Cardiac septum (tissue), 1 donor: ENCODE measurements at regions of chr19 and their contacts with region 1.

Region 1: DNA sequence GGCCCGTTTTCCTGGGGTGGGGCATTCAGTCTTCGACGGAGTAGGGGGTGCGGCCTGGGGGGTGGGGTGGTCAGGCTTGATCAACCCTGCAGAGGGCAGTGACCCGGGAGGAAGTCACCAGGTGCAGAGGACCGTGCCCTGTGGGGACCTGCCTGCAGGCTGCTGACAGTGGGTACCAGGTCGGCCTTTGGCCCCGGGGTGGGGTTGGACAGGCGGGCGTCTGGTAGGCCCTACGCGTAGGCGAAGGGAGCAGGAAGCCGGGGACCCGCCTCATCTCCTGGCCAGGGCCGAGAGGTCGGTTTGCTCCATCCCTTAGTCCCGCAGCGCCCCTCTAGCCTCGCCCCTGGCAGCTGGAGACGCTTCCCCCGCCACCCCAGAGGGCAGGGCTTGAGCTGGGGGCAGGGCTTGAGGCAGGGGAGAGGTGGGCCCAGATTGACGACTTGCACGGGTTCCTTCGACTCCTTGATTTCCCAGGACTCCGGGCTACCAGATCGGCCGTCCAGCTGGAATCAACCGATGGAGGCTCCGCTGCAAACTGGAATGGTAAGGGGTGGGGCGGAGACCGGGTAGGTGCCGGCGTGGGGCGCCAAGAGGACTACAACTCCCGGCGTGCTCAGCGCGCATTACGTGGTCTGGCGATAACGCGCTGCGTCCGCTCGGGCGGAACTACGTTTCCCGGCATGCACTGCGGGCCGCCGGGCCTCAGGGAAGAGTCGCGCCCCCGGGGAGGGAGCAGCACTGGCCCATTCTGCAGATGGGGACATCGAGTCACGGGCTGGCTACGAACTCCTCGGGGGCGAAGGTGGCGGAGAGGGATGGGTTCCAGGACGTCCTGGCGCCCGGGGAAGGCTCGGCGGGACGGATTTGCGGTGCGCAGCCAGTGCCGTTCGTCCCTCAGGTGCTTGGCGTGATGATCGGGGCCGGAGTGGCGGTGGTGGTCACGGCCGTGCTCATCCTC is at the start of gene PNPLA6:
- DNase-seq: peak; percentile 98
- total RNA-seq, gene PNPLA6: 41.9 TPM

Region 2: DNA sequence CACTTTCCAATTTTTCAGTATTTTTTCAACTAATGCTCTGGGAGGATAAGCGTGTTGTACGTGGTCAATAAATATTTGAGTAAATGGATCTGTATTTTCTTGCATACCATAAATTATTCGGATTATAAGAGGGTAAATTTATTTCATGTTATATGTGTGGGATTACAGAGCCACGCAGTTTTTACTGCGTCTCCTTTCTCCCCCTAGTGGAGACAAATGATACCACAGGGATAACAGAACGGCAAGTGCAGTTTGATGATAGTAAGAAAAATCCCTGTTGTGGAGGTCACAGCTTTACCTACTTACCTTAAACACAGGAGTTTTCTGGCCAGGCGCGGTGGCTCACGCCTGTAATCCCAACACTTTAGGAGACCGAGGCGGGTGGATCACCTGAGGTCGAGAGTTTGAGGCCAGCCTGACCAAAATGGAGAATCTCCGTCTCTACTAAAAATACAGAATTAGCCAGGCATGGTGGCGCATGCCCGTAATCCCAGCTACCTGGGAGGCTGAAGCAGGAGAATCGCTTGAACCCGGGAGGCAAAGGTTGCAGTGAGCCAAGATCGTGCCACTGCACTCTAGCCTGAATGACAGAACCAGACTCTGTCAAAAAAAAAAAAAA is 530.9 kb before region 1 on chr19:
- intact Hi-C with region 1: no loop called
- DNase-seq: no peak

Region 3: DNA sequence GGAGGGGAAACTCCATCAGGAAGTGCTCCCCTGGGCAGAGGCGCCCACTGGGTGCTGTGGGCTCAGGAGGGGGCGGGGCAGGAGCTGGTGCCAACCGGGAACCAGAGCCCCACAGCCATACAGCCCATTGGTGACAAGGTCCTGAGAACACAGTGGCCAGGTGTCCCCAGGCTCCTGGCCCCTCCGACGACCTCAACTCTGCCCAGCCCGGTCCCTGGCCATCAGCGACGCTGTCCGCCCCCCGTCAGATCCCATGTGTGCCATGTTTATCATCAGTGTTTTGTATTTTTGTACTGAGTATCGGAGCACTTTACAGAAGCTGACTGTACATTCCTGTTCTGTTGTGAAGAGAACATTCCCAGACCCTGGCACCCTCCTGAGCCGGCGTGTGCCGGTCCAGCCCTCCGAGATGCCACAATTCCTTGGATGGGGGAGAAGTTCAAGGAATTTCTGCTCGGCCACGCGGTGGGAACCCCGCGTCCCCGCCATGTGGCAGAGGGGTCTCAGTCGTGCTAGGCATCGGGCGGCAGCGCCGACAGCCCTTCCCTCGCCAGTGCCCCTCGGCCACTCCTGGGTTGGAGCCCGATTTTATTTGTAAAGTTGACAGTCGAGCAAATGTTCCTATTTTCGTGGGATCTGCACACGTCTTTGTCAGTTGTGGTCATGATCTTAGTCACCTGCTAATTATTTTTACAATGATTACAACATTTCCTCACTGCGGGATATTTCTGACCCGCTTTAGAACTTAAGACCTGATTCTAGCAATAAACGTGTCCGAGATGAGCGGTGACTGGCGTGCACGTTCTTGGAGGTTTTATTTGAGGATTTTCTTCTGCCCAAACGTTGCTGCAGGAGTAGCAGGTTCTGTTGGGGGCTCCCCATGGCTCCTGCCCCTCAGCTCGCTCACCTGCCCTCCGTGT is 63.4 kb before region 1 on chr19:
- intact Hi-C with region 1: no loop called
- DNase-seq: no peak

Region 4: DNA sequence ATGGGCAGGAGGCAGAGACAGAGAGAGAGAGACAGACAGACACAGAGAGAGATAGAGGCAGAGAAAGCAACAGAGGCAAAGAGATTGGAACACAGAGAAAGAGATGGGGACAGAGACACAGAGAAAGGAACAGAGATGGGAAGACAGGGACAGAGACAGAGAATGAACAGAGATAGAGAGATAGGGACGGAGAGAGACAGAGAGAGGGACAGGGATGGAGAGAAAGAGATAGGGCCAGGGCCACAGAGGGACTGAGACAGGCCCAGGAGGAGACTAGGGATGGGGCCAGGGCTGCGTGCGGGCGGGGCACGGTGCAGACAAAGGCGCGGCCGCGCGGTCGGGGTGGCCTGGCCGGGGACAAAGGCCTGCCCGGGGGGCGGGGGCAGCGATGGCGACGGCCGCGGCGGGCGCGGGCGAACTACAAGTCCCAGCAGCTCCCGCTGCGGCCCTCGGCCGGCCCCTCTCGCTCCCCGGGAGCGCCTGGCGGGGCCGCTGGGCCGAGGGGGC is 19.6 kb before region 1 on chr19 and contains the start of gene ZNF358:
- intact Hi-C with region 1: loop called (anchors 2 kb)
- DNase-seq: no peak
- total RNA-seq, gene ZNF358: 76.7 TPM

Region 5: DNA sequence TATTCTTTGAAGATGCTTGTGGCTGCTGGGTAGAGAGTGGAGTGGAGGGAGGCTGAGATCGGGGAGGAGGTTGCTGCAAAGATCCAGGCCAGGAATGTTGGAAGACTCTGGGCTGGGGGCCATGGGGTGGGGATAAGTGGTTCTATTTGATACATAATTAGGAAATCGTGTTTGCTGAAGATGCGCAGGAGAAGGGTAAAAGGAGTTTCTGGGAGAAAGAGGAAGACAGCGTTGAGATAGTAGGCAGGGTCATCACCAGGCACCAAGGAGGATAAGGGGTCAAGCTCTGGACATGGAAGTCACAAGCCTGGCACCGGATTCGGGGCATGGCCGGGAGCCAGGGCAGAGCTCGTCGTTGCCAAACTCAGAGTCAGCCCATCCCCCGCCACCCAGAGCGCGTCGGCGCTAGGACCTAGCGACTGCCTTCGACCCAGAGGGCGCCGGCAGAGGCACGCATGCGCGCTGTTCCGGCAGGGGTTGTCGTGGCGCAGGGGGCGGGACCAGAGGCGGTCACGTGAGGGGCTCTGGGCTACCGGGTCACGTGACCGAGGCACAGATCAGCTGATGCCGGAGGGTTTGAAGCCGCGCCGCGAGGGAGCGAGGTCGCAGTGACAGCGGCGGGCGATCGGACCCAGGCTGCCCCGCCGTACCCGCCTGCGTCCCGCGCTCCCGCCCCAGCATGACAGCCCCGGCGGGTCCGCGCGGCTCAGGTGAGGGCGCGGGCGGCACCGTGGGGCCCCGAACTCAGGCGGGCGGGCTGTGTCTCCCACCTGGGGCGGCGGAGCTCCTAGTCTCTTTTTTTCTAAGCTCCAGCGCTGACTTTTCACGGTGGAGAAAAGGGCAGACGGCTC is 13.0 kb before region 1 on chr19 and contains the start of gene MCOLN1:
- intact Hi-C with region 1: loop called (anchors 1 kb)
- DNase-seq: peak; percentile 100
- total RNA-seq, gene MCOLN1: 16.0 TPM

Region 6: DNA sequence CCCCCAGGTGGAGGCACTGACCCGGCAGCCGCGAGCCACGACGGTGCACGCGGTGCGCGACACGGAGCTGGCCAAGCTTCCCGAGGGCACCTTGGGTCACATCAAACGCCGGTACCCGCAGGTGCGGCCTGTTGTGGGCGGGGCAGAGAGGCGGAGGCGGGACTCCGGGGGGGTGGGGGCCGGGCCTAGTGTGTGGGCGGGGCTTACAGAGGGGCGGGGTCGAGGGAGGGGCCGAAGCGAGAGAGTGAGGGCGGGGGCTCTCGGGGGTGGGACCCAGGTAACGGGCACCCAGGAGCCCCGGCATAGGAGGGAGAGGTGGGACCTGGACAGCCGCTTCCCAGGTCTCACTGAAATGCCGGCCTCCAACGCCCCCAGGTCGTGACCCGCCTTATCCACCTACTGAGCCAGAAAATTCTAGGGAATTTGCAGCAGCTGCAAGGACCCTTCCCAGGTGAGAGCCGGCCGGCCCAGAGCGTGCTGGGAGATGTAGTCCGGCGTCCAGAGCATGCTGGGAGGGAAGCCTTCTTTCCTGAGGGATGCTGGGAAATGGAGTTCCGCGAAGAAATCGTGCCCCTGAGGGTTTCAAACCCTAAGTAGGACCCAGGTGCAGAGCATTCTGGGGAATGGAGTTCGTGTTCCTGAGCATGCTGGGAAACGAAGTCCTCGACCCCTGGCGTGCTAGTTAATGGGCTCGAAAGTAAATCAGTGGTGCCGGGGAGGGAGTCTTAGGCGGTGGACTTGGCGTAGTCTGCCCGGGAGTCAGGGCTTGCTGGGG is 15.9 kb after region 1 on chr19:
- intact Hi-C with region 1: loop called (anchors 1 kb)
- DNase-seq: no peak

Region 7: DNA sequence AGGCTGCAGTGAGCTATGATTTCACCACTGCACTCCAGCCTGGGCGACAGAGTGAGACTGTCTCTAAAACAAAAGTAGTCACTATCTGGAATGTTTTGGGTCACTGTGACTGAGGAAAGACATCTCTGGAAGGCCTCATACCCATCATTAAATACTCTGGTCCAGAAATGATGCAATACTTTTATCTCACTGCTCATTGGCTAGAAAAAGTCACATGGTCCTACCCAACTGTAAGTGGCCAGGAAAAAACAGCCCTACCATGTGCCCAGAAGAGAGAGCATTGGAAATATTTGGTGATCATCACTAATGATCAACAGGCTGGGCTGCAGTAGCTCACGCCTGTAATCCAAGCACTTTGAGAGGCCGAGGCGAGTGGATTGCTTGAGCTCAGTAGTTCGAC is 30.0 kb after region 1 on chr19:
- intact Hi-C with region 1: no loop called
- DNase-seq: no peak

Region 8: DNA sequence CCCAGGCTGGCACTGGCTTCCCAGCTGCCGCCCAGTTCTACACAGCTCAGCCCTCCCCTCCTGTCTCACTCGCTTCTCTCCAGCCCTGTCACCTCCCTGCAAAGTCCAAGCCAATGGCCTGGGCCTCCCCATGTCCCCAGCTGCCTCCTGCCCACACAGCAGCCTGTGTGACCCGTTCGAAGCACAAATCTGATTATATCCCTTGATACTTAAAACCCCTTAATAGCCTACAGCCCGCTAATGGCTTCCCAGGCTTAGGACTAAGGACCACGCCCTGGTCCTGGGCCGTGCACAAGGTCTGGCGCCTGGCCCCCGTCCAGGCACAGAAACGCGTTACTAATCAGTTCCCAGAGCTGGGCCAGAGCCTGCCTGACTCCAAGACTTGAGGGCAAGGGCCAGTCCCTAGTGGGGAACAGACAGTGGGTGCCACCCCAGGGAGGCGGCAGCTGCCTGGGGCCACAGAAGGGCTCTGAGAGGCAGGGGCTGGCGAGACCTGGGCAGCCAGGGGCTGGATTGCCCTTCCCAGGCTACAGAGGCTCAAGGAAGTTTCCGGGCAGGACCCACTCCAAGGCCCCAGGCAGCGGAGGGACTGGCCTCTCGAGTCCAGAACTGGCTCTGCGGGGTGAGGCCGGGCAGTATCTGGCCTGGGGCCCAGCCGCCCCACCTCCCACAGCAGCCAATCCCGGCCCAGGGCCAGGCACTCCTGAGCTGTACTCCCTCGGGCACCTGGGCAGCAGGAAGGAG is 83.6 kb after region 1 on chr19:
- intact Hi-C with region 1: no loop called
- DNase-seq: no peak